ENCODE measurements at regions of chr1 and their contacts with region 1.

Region 1: GRCh38 chr1:227318003-227318852 is at the start of gene CDC42BPA:
- DNase-seq: peak; percentile 95 to 99 (median 97)
- ATAC-seq: peak; percentile 80
- H3K4me3 ChIP-seq: peak within 1 kb of the TSS; percentile 77
- H3K27ac ChIP-seq: peak within 1 kb of the TSS; percentile 88
- H3K4me1 ChIP-seq: peaks cover 8 to 14% of the 10 kb centered on the region in 2 experiments; a peak in 4 of 5 replicates
- H3K27me3 ChIP-seq: no peaks in the 10 kb centered on the region
- CTCF ChIP-seq: 0 out of 6 replicates have a peak, but pooled peaks of 1 of the 3 experiments have one; percentile 5
- EP300 ChIP-seq: 0 out of 2 replicates have a peak, but pooled peaks have one; percentile 8
- POLR2A ChIP-seq: peak; percentile 83
- RAD21 ChIP-seq: 0 out of 4 replicates have a peak, but pooled peaks of 1 of the 2 experiments have one; percentile 3
- polyA plus RNA-seq, gene CDC42BPA: 8.0 to 52.1 TPM

Region 2: DNA sequence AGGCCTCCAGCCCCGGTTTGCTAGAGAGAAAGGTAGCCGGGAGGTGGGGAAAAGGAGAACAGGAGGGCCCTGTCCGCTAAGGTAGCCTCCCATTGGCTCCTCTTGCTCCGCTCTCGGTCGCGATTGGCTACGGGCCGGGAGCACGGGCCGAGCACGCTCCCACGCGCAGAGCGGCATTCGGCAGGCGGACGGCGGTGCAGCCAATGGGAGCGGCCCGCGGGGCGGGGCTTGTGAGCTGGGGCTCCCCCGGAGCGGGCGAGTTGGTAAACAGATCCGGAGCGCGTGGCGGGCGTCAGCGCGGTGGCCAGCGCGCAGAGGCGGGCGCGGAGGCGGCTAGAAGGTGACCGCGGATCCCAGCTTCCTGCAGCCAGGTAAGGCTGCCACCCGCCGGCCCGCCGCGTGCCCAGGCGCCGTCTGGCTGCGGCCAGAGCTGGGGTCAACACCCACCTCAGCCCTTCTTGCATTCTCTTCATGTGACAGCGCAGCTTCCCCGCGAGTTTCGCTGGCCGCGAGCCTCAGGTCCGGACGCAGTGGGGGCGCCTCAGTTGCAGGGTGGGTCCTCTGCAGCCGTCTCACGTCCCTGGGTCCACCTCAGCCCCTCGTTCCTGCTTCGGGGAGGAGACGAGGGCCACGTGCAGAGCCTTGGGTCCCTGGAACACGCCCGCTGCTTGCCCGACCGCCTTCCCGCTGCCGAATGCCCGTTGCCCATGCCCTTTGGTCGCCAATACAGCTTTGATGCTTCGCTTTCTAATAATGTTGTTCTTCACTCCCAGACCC is 378.0 kb before region 1 on chr1 and contains the start of gene COQ8A:
- CTCF ChIA-PET with region 1: no interaction called
- POLR2A ChIA-PET with region 1: interaction called, 3 read pairs
- in situ Hi-C with region 1: no loop called
- intact Hi-C with region 1: loop called (anchors 10 kb)
- DNase-seq: peak; percentile 100
- ATAC-seq: peak; percentile 96
- H3K4me3 ChIP-seq: peak within 1 kb of the TSS; percentile 54
- H3K27ac ChIP-seq: peak within 1 kb of the TSS; percentile 96
- H3K4me1 ChIP-seq: peaks cover 55 to 56% of the 10 kb centered on the region in 2 experiments
- H3K27me3 ChIP-seq: no peaks in the 10 kb centered on the region
- CTCF ChIP-seq: no peak
- EP300 ChIP-seq: no peak; the same call in none of the 2 replicates
- POLR2A ChIP-seq: no peak
- RAD21 ChIP-seq: no peak; a peak in 1 of 4 replicates
- polyA plus RNA-seq, gene COQ8A: 2.6 to 4.1 TPM

Region 3: DNA sequence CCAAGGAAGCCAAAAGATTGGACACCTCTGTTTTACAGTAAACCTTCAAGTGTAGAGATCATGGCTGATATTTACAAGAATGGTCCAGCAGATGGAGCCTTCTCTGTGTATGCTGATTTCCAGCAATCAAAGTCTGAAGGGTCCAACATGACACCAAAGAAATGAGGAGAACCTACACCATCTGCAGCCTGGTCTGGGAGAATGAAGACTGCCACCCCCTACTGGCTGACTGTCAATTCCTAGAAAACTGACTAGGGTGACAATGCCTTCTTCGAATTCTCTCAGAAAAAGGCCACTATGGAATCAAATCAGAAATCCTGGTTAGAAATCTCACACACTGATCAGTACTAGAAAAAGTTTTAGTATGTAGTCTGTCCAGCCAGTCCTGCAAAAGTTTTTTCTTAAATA is 83.2 kb before region 1 on chr1:
- CTCF ChIA-PET with region 1: no interaction called
- POLR2A ChIA-PET with region 1: no interaction called
- in situ Hi-C with region 1: no loop called
- intact Hi-C with region 1: loop called (anchors 2 kb)
- DNase-seq: peak; percentile 69 to 90 (median 82)
- ATAC-seq: peak; percentile 98
- H3K4me3 ChIP-seq: no peak overlapping the region
- H3K27ac ChIP-seq: peak overlapping the region; percentile 5; the same call in 1 of the 3 replicates
- H3K4me1 ChIP-seq: peaks cover 5 to 7% of the 10 kb centered on the region in 2 experiments; a peak in 4 of 5 replicates
- H3K27me3 ChIP-seq: no peaks in the 10 kb centered on the region
- CTCF ChIP-seq: peak; percentile 85 to 89 (median 88)
- EP300 ChIP-seq: peak; percentile 68
- POLR2A ChIP-seq: no peak
- RAD21 ChIP-seq: peak; percentile 55 to 90

Region 4: GRCh38 chr1:227273557-227273956 is 44.7 kb before region 1 on chr1:
- CTCF ChIA-PET with region 1: no interaction called
- POLR2A ChIA-PET with region 1: no interaction called
- in situ Hi-C with region 1: no loop called
- intact Hi-C with region 1: no loop called
- DNase-seq: peak in 2 of 4 experiments; percentile 28 to 70
- ATAC-seq: peak; percentile 80
- H3K4me3 ChIP-seq: no peak overlapping the region
- H3K27ac ChIP-seq: no peak overlapping the region
- H3K4me1 ChIP-seq: no peaks in the 10 kb centered on the region; a peak in 1 of 5 replicates
- H3K27me3 ChIP-seq: no peaks in the 10 kb centered on the region
- CTCF ChIP-seq: no peak
- EP300 ChIP-seq: no peak
- POLR2A ChIP-seq: no peak
- RAD21 ChIP-seq: no peak

Region 5: GRCh38 chr1:227299241-227299627 is 19.0 kb before region 1 on chr1:
- CTCF ChIA-PET with region 1: no interaction called
- POLR2A ChIA-PET with region 1: interaction called, 10 read pairs
- in situ Hi-C with region 1: no loop called
- intact Hi-C with region 1: no loop called
- DNase-seq: no peak
- ATAC-seq: no peak
- H3K4me3 ChIP-seq: no peak overlapping the region
- H3K27ac ChIP-seq: peak overlapping the region; percentile 42; the same call in 2 of the 3 replicates
- H3K4me1 ChIP-seq: peaks cover 5 to 21% of the 10 kb centered on the region in 2 experiments; a peak in 3 of 5 replicates
- H3K27me3 ChIP-seq: no peaks in the 10 kb centered on the region
- CTCF ChIP-seq: no peak
- EP300 ChIP-seq: 0 out of 2 replicates have a peak, but pooled peaks have one; percentile 9
- POLR2A ChIP-seq: no peak
- RAD21 ChIP-seq: no peak

Region 6: GRCh38 chr1:227396539-227397353 is 78.5 kb after region 1 on chr1:
- CTCF ChIA-PET with region 1: no interaction called
- POLR2A ChIA-PET with region 1: interaction called, 3 read pairs
- in situ Hi-C with region 1: no loop called
- intact Hi-C with region 1: loop called (anchors 2 kb)
- DNase-seq: peak; percentile 86 to 97 (median 89)
- ATAC-seq: peak; percentile 93
- H3K4me3 ChIP-seq: peak overlapping the region; percentile 14; the same call in 1 of the 2 replicates
- H3K27ac ChIP-seq: peak overlapping the region; percentile 87
- H3K4me1 ChIP-seq: peaks cover 26 to 36% of the 10 kb centered on the region in 2 experiments
- H3K27me3 ChIP-seq: no peaks in the 10 kb centered on the region
- CTCF ChIP-seq: no peak; a peak in 1 of 6 replicates
- EP300 ChIP-seq: peak; percentile 99
- POLR2A ChIP-seq: no peak
- RAD21 ChIP-seq: peak; percentile 30 to 47; a peak in 3 of 4 replicates

Region 7: DNA sequence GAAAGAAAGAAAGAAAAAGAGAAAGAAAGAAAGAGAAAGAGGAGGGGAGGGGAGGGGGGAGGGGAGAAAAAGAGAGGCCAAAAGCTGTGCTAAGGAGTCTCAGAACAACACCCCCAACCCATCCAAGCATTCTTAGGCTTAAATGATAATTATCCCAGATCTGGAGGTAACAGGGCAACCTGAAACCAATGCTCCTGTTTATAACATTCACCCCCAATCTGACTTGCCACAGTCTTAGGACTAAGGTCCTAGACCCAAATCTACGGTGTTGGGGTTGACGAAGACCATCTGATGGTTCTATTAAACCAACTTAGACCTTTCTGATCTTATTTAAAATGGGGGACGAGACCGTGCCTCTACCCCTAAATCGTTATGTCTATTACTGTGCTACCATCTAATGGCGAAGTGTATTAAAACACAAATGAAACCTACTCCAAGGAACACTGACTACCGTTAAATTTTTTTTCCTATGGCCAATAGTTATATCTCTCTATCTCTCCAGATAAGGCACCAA is 119.3 kb after region 1 on chr1:
- CTCF ChIA-PET with region 1: interaction called, 3 read pairs
- POLR2A ChIA-PET with region 1: interaction called, 4 read pairs
- in situ Hi-C with region 1: no loop called
- intact Hi-C with region 1: loop called (anchors 2 kb)
- DNase-seq: peak; percentile 47 to 83 (median 65)
- ATAC-seq: peak; percentile 88
- H3K4me3 ChIP-seq: 0 out of 2 replicates have a peak overlapping the region, but pooled peaks have one; percentile 9
- H3K27ac ChIP-seq: peak overlapping the region; percentile 43; the same call in 1 of the 3 replicates
- H3K4me1 ChIP-seq: peaks cover 4 to 22% of the 10 kb centered on the region in 2 experiments; a peak in 4 of 5 replicates
- H3K27me3 ChIP-seq: no peaks in the 10 kb centered on the region
- CTCF ChIP-seq: peak; percentile 59 to 82 (median 67); a peak in 5 of 6 replicates
- EP300 ChIP-seq: no peak
- POLR2A ChIP-seq: no peak
- RAD21 ChIP-seq: peak; percentile 95 to 96

Measured in K562 (cell line).